Naive thymus-derived CD4-positive, alpha-beta T cell (primary cell): ENCODE measurements at regions of chr5 and their contacts with region 1.

Region 1: DNA sequence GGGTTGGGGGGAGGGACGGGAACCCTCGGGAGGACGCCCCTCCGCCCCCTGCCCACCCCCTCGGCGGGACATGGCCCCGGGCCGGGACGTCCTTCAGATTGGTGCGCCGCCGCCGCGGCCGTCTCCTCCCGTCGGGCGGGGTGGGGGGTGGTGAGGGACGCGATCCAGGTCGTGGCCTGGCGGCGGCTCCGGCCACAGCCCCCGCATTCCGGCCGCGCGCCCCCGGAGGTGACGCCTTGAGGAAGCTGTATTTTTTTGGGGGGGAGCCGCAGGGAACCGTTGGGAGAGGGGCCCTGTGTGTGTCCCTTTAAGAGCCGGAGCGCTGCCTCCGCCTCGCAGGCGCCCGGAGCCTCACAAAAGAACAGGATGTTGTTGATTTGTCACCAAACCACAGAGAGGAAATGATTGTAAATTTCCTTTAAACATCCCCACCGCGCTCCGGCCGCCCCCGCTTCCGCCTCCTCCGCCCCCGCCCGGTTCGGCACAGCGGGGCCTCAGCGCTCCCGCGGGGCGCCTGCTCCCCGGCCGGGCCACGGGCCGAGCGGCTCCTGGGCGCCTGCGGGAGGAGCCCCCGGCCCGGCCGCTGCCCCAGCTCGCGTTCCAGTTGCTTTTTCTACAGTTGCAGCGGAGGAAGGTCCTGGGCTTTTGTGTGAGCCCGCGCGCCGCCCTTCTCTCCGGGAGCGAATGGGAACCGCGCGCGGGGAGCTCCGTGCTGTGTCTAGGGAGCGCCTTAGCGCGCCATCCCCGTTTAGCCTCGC is 32.1 kb upstream of the SPRY4 start:
- DNase-seq: peak; percentile 69 to 96 (median 88)
- ATAC-seq: peak; percentile 95
- H3K4me3 ChIP-seq: peak overlapping the region; percentile 62
- H3K4me3 Mint-ChIP-seq: peak overlapping the region; percentile 78 to 88 (median 86)
- H3K27ac ChIP-seq: peak overlapping the region; percentile 35
- H3K27ac Mint-ChIP-seq: peak overlapping the region; percentile 58 to 93 (median 86)
- H3K4me1 ChIP-seq: peaks cover 15 to 35% of the 10 kb centered on the region in 2 donors
- H3K4me1 Mint-ChIP-seq: peaks cover 24 to 64% (median 53%) of the 10 kb centered on the region in 7 donors
- H3K27me3 ChIP-seq: no peaks in the 10 kb centered on the region
- H3K27me3 Mint-ChIP-seq: peaks cover 0 to 12% (median 0%) of the 10 kb centered on the region in 5 donors

Region 2: GRCh38 chr5:141598391-141599350 is 758.2 kb before region 1 on chr5:
- CTCF ChIA-PET with region 1: no interaction called
- POLR2A ChIA-PET with region 1: no interaction called
- intact Hi-C with region 1: loop called in 1 of 2 experiments (anchors 5 kb)
- DNase-seq: no peak
- ATAC-seq: peak; percentile 40
- H3K4me3 ChIP-seq: no peak overlapping the region
- H3K4me3 Mint-ChIP-seq: peak overlapping the region in 7 of 10 donors; percentile 25 to 60 (median 47)
- H3K27ac ChIP-seq: peak overlapping the region; percentile 43
- H3K27ac Mint-ChIP-seq: peak overlapping the region; percentile 56 to 92 (median 86)
- H3K4me1 ChIP-seq: peaks cover 59 to 69% of the 10 kb centered on the region in 2 donors
- H3K4me1 Mint-ChIP-seq: peaks cover 44 to 89% (median 81%) of the 10 kb centered on the region in 7 donors
- H3K27me3 ChIP-seq: no peaks in the 10 kb centered on the region
- H3K27me3 Mint-ChIP-seq: no peaks in the 10 kb centered on the region

Region 3: DNA sequence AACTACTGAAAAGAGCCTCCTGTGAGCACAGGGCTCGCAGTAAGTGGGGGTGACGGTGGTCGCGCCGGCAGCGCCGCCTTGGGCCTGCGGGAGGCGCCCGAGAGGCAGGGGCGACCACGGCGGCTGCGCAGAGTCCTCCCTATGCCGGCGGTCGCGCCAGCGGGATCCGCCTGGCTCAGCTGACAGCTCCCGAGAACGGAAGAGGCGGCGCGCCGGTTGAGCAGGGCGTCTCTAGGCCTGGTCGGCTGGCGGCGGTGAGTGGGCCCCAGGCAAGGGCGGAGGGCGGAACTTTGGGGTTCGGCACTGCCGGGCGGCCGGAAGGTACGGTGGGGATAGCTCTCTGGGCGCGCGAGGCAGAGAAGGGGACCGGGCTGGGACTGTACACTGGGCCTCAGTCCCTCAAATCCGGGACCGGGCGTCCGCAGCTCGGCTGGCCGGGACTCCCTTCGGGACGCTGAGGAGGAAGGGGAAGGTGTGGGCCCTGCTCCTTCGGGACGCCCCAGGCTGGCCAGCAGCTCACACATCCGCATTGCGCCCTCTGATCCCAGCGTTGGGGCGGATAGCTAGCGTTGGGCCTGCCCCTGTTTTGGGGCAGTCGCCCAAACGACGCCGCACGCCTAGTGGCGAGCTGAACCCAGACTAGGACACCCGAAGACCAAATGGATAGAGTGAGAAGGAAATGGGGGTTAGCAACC is 387.8 kb before region 1 on chr5 and contains the start of gene RNF14:
- CTCF ChIA-PET with region 1: no interaction called
- POLR2A ChIA-PET with region 1: no interaction called
- intact Hi-C with region 1: loop called (anchors 1 to 2 kb)
- DNase-seq: peak; percentile 90 to 96 (median 92)
- ATAC-seq: peak; percentile 97
- H3K4me3 ChIP-seq: peak within 1 kb of the TSS; percentile 69
- H3K4me3 Mint-ChIP-seq: peak within 1 kb of the TSS; percentile 88 to 97 (median 94)
- H3K27ac ChIP-seq: peak within 1 kb of the TSS; percentile 94
- H3K27ac Mint-ChIP-seq: peak within 1 kb of the TSS; percentile 92 to 98 (median 97)
- H3K4me1 ChIP-seq: peaks cover 13 to 18% of the 10 kb centered on the region in 2 donors
- H3K4me1 Mint-ChIP-seq: peaks cover 12 to 47% (median 40%) of the 10 kb centered on the region in 7 donors
- H3K27me3 ChIP-seq: no peaks in the 10 kb centered on the region
- H3K27me3 Mint-ChIP-seq: peaks cover 0 to 2% (median 0%) of the 10 kb centered on the region in 5 donors
- total RNA-seq, gene RNF14: 14.7 to 32.0 (median 24.8) TPM

Region 4: DNA sequence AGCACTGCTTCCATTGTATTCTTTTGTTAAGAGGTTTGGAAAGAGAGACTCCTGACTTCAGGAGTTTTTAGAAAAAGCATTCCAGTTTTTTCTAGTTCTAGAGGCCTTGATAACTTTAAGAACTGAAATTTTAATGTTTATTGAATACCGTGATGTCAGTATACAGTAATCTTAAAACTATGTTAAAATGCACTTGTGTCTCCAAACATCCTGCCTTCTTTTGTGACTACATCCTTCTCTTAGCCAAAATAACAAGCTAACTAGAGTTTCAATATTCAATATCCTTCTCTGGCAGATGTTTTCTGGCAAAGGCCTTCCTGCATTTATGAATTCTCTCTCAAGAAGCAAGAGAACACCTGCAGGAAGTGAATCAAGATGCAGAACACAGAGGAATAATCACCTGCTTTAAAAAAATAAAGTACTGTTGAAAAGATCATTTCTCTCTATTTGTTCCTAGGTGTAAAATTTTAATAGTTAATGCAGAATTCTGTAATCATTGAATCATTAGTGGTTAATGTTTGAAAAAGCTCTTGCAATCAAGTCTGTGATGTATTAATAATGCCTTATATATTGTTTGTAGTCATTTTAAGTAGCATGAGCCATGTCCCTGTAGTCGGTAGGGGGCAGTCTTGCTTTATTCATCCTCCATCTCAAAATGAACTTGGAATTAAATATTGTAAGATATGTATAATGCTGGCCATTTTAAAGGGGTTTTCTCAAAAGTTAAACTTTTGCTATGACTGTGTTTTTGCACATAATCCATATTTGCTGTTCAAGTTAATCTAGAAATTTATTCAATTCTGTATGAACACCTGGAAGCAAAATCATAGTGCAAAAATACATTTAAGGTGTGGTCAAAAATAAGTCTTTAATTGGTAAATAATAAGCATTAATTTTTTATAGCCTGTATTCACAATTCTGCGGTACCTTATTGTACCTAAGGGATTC is 205.2 kb before region 1 on chr5:
- CTCF ChIA-PET with region 1: no interaction called
- POLR2A ChIA-PET with region 1: no interaction called
- intact Hi-C with region 1: loop called (anchors 2 to 5 kb)
- DNase-seq: peak in 6 of 9 donors; percentile 49 to 69 (median 62)
- ATAC-seq: peak; percentile 87
- H3K4me3 ChIP-seq: no peak overlapping the region
- H3K4me3 Mint-ChIP-seq: no peak overlapping the region
- H3K27ac ChIP-seq: no peak overlapping the region
- H3K27ac Mint-ChIP-seq: peak overlapping the region in 2 of 9 donors; percentile 16 to 56
- H3K4me1 ChIP-seq: no peaks in the 10 kb centered on the region
- H3K4me1 Mint-ChIP-seq: peaks cover 0 to 26% (median 9%) of the 10 kb centered on the region in 7 donors
- H3K27me3 ChIP-seq: no peaks in the 10 kb centered on the region
- H3K27me3 Mint-ChIP-seq: no peaks in the 10 kb centered on the region

Region 5: GRCh38 chr5:142324871-142325724 is 31.8 kb before region 1 on chr5 and contains the start of gene SPRY4:
- CTCF ChIA-PET with region 1: interaction called, 3 read pairs
- POLR2A ChIA-PET with region 1: interaction called, 8 read pairs
- intact Hi-C with region 1: loop called (anchors 1 kb)
- DNase-seq: peak; percentile 35 to 86 (median 82)
- ATAC-seq: peak; percentile 82
- H3K4me3 ChIP-seq: peak within 1 kb of the TSS; percentile 62
- H3K4me3 Mint-ChIP-seq: peak within 1 kb of the TSS; percentile 85 to 93 (median 88)
- H3K27ac ChIP-seq: no peak within 1 kb of the TSS
- H3K27ac Mint-ChIP-seq: peak within 1 kb of the TSS in 3 of 9 donors; percentile 48 to 62 (median 53)
- H3K4me1 ChIP-seq: peaks cover 20 to 25% of the 10 kb centered on the region in 2 donors
- H3K4me1 Mint-ChIP-seq: peaks cover 19 to 41% (median 32%) of the 10 kb centered on the region in 7 donors
- H3K27me3 ChIP-seq: peaks cover 3 to 24% of the 10 kb centered on the region in 2 donors
- H3K27me3 Mint-ChIP-seq: peaks cover 57 to 69% (median 66%) of the 10 kb centered on the region in 5 donors
- total RNA-seq, gene SPRY4: 0.08 to 0.34 (median 0.11) TPM in 3 of 5 experiments, not detected in the others

Region 6: GRCh38 chr5:144170276-144171024 is 1813.6 kb after region 1 on chr5 and contains the starts of genes KCTD16 and YIPF5:
- CTCF ChIA-PET with region 1: no interaction called
- POLR2A ChIA-PET with region 1: no interaction called
- intact Hi-C with region 1: loop called in 1 of 2 experiments (anchors 5 kb)
- DNase-seq: peak; percentile 90 to 98 (median 98)
- ATAC-seq: peak; percentile 98
- H3K4me3 ChIP-seq: peak within 1 kb of the TSS; percentile 79
- H3K4me3 Mint-ChIP-seq: peak within 1 kb of the TSS; percentile 90 to 99 (median 94)
- H3K27ac ChIP-seq: peak within 1 kb of the TSS; percentile 91
- H3K27ac Mint-ChIP-seq: peak within 1 kb of the TSS; percentile 85 to 96 (median 95)
- H3K4me1 ChIP-seq: peaks cover 15 to 19% of the 10 kb centered on the region in 2 donors
- H3K4me1 Mint-ChIP-seq: peaks cover 19 to 56% (median 52%) of the 10 kb centered on the region in 7 donors
- H3K27me3 ChIP-seq: no peaks in the 10 kb centered on the region
- H3K27me3 Mint-ChIP-seq: peaks cover 0 to 29% (median 0%) of the 10 kb centered on the region in 5 donors
- total RNA-seq, gene KCTD16: 0.07 to 0.22 TPM in 2 of 5 experiments, not detected in the others
- total RNA-seq, gene YIPF5: 27.0 to 49.2 (median 38.6) TPM